H1 (cell line): ENCODE measurements at regions of chr17 and their contacts with region 1.

Region 1: DNA sequence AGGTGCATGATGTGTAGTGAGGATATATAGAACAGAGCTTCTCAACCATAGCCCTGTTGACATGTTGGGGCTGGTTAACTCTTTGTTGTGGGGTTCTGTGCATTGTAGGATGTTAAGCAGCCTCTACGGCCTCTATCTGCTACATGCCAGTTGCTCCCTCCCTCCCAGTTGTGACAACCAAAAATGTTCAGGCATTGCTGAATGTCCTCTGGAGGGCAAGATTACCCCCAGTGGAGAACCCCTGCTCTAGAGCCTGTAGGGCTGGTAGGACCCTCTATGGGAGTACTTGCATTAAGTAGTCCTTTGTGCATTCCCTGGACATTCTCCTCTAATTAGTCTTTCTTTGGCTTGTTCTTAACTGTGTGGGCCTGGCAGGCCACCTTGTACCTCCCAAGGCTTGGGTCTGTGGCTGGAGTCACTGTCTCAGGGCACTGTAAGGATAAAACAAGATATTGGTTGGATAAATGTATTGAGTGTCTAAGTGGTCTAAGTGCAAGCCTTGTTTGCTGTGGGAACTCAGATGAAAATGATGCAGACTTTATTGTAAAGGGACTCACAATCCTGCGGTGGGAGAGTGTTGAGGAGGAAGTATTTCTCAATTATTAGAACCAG is 19.8 kb upstream of the MYO1D start:
- DNase-seq: no peak
- H3K4me3 ChIP-seq: no peak overlapping the region
- H3K27ac ChIP-seq: no peak overlapping the region
- H3K4me1 ChIP-seq: no peaks in the 10 kb centered on the region
- H3K27me3 ChIP-seq: no peaks in the 10 kb centered on the region
- CTCF ChIP-seq: no peak
- EP300 ChIP-seq: no peak
- POLR2A ChIP-seq: no peak
- RAD21 ChIP-seq: no peak

Region 2: DNA sequence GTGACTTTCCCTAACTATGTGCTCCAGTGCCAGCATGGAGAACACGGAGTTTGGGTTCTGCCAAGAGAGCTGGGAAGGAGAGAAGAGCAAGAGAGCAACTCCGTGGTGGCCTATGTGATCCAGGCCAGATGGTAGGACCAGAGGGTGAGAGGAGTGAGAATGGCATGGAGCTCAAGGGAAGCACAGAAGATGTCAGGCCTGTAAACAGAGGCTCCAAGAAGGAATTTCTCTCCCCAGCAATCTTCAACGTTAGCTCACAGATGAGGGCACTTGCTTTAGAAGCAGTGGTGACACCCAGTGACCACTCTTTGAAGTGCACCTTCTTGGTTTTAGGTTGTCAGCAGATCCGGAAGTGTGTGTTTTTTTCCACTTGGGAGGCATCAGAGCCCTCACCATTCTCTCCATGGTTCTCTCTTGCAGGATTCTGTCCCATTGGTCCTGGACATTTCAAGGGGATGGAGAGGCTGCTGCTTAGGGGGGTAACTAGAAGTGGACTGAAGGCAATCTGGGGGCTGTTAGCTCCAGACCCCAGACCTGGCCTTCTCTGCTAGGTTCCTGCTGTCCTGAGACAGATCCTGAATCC is 13.1 kb after region 1 on chr17:
- CTCF ChIA-PET with region 1: interaction called, 24 read pairs
- POLR2A ChIA-PET with region 1: interaction called, 3 read pairs
- DNase-seq: peak in 1 of 2 experiments; percentile 80
- H3K4me3 ChIP-seq: no peak overlapping the region
- H3K27ac ChIP-seq: no peak overlapping the region
- H3K4me1 ChIP-seq: peaks cover 0 to 3% (median 1%) of the 10 kb centered on the region in 4 experiments; a peak in 2 of 7 replicates
- H3K27me3 ChIP-seq: no peaks in the 10 kb centered on the region
- CTCF ChIP-seq: peak; percentile 40 to 91 (median 70)
- EP300 ChIP-seq: no peak
- POLR2A ChIP-seq: no peak
- RAD21 ChIP-seq: peak; percentile 81 to 89